IMR-90 (cell line): ENCODE measurements at regions of chr9 and their contacts with region 1.

Region 1: DNA sequence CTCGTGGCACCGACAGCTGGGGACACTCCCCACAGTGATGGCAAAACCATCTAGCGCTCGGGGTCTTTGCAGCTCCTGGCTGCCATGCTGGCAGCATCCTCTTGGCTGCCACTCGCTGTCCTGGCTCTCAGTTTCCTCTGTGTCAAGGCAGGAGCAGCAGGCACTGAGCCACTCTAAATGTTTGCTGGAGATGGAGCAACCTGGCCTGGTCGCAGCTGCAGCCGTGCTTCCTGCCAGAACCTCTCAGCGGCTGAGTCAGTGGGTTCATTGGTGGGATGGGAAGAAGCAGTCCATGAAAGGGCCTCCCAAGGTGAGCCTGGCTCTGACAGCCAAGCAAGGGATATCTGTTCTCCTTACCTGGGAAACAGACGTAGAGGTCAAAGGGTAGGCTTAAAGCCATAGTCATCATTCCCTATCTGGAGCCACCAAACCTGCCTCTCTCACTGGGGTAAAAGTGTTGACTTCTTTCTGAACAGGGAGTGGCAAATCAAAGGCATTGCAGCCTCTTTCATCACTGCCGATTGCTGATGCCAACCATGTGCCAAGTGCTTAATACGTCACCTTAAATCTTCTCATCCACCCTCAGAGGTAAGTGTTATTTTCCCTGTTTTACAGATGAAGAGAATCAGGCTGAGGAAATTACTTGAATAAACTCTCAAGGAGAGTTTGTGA is 304.8 kb upstream of the ZNF462 start:
- DNase-seq: no peak
- ATAC-seq: no peak
- H3K4me3 ChIP-seq: no peak overlapping the region
- H3K27ac ChIP-seq: no peak overlapping the region
- H3K4me1 ChIP-seq: no peaks in the 10 kb centered on the region
- H3K27me3 ChIP-seq: no peaks in the 10 kb centered on the region
- CTCF ChIP-seq: no peak
- POLR2A ChIP-seq: no peak
- RAD21 ChIP-seq: no peak

Region 2: DNA sequence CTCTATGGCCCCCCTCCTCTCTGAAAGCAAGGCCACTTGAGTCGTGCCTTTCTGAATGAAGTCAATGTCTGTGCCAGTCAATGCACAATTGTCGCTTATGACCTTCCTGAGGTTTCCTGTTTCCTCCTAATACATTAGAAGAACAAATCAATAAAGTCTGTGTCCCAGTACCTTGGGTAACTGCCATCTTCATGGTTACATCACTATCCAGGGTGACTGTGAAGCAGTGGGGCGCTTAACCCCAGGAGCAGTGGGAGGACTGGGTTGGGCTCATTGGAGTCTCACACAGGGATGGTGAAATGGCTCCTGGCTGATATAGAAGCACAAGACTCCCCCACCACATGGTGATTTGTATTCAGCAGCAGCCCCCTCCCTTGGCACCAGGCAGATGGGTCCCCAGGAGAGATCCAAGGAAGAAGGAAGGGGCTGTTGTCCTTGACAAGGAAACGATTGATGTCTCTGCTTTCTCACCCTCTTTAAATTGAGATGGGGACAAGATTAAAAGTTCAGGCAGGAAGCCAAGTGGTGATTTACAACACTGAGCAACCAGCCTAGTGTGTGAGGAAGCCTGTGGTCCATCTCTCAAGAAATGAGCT is 42.9 kb after region 1 on chr9:
- CTCF ChIA-PET with region 1: no interaction called
- POLR2A ChIA-PET with region 1: no interaction called
- dilution Hi-C with region 1: no loop called
- in situ Hi-C with region 1: no loop called
- intact Hi-C with region 1: no loop called
- DNase-seq: no peak
- ATAC-seq: no peak
- H3K4me3 ChIP-seq: no peak overlapping the region
- H3K27ac ChIP-seq: no peak overlapping the region
- H3K4me1 ChIP-seq: no peaks in the 10 kb centered on the region
- H3K27me3 ChIP-seq: no peaks in the 10 kb centered on the region
- CTCF ChIP-seq: no peak
- POLR2A ChIP-seq: no peak
- RAD21 ChIP-seq: no peak

Region 3: GRCh38 chr9:106816524-106816923 is 258.4 kb after region 1 on chr9:
- CTCF ChIA-PET with region 1: no interaction called
- POLR2A ChIA-PET with region 1: no interaction called
- dilution Hi-C with region 1: no loop called
- in situ Hi-C with region 1: no loop called
- intact Hi-C with region 1: no loop called
- DNase-seq: no peak
- ATAC-seq: no peak
- H3K4me3 ChIP-seq: no peak overlapping the region
- H3K27ac ChIP-seq: no peak overlapping the region
- H3K4me1 ChIP-seq: no peaks in the 10 kb centered on the region
- H3K27me3 ChIP-seq: no peaks in the 10 kb centered on the region; the same call in 1 of the 2 replicates
- CTCF ChIP-seq: no peak
- POLR2A ChIP-seq: no peak
- RAD21 ChIP-seq: no peak

Region 4: DNA sequence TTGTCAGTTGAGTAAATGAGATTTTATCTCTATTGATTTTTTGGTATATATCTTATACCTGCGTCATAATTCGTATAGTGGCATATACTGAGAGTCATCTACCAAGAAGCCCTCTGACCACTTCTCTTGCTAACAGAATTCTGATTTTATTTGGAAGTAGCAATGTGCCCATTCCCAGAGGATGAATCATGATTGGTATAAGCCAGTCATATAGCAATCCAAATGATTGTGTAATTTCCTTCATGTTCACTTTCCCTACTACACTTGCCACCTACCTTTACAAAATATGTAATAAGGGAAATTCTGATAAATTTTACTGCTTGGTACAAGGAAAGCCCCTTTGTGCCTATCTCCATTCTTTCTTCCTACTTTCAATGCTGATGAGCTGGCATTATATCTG is 288.7 kb after region 1 on chr9:
- CTCF ChIA-PET with region 1: no interaction called
- POLR2A ChIA-PET with region 1: no interaction called
- dilution Hi-C with region 1: no loop called
- in situ Hi-C with region 1: no loop called
- intact Hi-C with region 1: loop called (anchors 10 kb)
- DNase-seq: peak; percentile 34
- ATAC-seq: no peak
- H3K4me3 ChIP-seq: no peak overlapping the region
- H3K27ac ChIP-seq: no peak overlapping the region
- H3K4me1 ChIP-seq: no peaks in the 10 kb centered on the region
- H3K27me3 ChIP-seq: no peaks in the 10 kb centered on the region
- CTCF ChIP-seq: no peak
- POLR2A ChIP-seq: no peak
- RAD21 ChIP-seq: no peak